ENCODE measurements at regions of chr17 and their contacts with region 1.

Region 1: DNA sequence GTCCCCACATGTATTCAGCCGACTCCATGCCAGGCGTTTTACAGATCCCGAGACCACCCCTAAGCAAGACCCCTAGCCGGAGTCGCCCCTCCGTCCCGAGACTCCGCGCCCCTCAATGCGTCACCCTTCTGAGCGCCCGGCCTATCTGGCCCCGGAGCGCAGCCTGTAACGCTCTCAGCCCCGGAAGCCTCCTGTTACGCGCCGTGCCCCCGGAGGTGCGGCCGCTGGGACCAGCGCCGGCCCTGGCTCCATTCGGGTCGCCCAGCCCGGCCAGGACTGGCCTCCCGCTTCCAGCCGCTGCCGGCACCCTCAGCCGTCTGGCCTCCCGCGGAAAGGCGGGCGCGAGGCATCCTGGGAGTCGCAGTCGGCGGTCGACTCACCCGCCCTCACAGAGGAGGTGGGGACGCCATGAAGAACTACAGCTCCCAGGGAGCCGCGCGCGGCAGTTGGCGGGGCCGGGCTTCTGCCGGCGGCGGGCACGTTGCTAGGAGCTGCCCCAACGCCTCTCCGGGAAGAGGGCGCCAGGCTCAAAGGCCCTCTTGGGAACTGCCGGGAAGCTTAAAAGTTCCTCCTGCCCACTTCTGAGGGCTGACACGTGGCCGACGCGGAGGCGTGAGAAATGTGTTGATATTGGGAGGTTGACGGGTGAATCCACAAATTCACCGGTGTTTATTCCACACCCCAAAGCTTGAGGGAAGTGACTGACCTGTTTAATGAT is at the start of gene FBF1:
- DNase-seq: peak; percentile 96 to 97
- H3K4me3 ChIP-seq: peak within 1 kb of the TSS; percentile 56 to 80 (median 71)
- H3K27ac ChIP-seq: peak within 1 kb of the TSS; percentile 41 to 75 (median 75)
- H3K4me1 ChIP-seq: peaks cover 7 to 13% of the 10 kb centered on the region in 2 donors
- H3K27me3 ChIP-seq: no peaks in the 10 kb centered on the region
- CTCF ChIP-seq: peak in 1 of 6 experiments; percentile 21
- POLR2A ChIP-seq: peak; percentile 76 to 95
- total RNA-seq, gene FBF1: 41.7 to 49.7 (median 43.4) TPM

Region 2: GRCh38 chr17:75723171-75723834 is 217.6 kb before region 1 on chr17:
- intact Hi-C with region 1: no loop called
- DNase-seq: no peak
- H3K4me3 ChIP-seq: no peak overlapping the region
- H3K27ac ChIP-seq: no peak overlapping the region
- H3K4me1 ChIP-seq: peaks cover 11 to 12% of the 10 kb centered on the region in 2 donors
- H3K27me3 ChIP-seq: no peaks in the 10 kb centered on the region
- CTCF ChIP-seq: no peak
- POLR2A ChIP-seq: no peak

Region 3: DNA sequence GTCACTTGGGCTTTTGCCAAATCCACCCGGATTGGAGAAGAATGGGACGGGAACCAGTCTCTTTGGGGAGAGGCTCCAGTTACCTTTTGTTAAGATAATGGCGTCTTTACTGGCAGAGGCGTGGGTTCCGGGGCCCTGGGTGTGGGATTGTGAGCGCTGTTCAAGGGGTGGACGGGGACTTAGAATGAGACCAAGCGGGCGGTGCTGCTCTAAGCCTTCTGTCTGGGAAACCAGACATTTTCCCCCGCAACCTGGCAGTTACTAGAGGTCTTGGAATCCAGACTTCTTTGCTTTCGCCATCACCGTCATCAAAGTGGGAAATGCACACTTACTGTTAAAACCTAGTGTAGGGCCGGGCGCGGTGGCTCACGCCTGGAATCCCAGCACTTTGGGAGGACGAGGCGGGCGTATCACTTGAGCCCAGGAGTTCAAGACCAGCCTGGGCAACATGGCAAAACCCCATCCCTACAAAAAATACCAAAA is 38.9 kb after region 1 on chr17:
- intact Hi-C with region 1: loop called (anchors 5 kb)
- DNase-seq: no peak
- H3K4me3 ChIP-seq: peak overlapping the region; percentile 78 to 81 (median 80)
- H3K27ac ChIP-seq: peak overlapping the region; percentile 93 to 99 (median 99)
- H3K4me1 ChIP-seq: peaks cover 26 to 32% of the 10 kb centered on the region in 2 donors
- H3K27me3 ChIP-seq: no peaks in the 10 kb centered on the region
- CTCF ChIP-seq: peak in 1 of 6 experiments; percentile 10
- POLR2A ChIP-seq: no peak